PC-9 (cell line): ENCODE measurements at regions of chr9 and their contacts with region 1.

Region 1: GRCh38 chr9:129761901-129762364 is 9.1 kb upstream of the PTGES start:
- DNase-seq: peak; percentile 80 to 96
- H3K4me3 ChIP-seq: peak overlapping the region; percentile 23; the same call in 1 of the 2 replicates
- H3K27ac ChIP-seq: peak overlapping the region; percentile 97
- H3K4me1 ChIP-seq: peaks cover 60% of the 10 kb centered on the region
- H3K27me3 ChIP-seq: no peaks in the 10 kb centered on the region
- CTCF ChIP-seq: no peak

Region 2: DNA sequence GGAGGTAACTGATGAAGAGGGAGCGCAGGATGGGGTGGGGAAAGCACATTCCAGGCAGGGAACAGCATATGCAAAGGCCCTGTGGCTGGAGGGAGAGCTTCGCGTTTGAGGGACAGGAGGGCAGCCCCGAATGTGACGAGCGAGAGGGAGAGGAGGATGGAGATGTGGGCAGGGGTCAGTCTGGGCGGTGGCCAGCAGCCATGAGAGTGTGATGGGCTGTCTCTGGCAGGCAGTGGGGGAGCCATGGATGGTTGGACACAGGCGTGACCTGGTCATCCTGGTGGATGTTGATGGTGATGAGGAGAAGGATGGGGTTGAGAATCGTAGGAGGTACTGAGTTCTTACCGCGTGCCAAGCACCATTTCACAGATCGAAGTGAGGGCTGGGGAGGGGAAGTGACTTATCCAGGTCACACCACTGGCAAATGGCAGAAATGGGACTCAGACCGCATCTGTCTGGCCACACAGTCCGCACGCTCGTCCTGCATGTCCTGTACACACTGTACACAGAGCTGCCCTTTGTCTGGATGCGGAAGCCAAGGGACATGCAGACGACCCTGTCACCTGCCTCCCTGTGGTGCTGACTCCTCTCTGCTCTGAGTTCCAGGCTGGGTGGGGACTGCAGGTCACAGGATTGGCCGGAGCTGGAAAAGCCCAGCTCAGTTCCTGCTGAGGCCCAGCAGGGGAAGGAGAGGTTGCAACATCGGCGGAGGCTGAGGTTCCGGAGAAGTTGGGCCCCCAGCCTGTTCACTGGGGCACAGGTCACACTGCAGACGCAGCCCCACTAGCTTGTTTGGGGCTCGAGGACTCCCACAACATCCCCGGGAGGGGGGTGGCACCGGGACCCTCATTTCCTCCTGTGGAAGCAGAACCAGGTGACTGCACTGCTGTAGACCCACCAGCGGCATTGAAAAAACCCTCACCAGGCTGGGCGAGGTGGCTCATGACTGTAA is 418.2 kb before region 1 on chr9:
- CTCF ChIA-PET with region 1: no interaction called
- POLR2A ChIA-PET with region 1: no interaction called
- intact Hi-C with region 1: no loop called
- DNase-seq: peak in 1 of 2 experiments; percentile 79
- H3K4me3 ChIP-seq: no peak overlapping the region
- H3K27ac ChIP-seq: peak overlapping the region; percentile 68
- H3K4me1 ChIP-seq: peaks cover 30% of the 10 kb centered on the region
- H3K27me3 ChIP-seq: no peaks in the 10 kb centered on the region
- CTCF ChIP-seq: no peak

Region 3: GRCh38 chr9:129676975-129677841 is 84.7 kb before region 1 on chr9:
- CTCF ChIA-PET with region 1: no interaction called
- POLR2A ChIA-PET with region 1: no interaction called
- intact Hi-C with region 1: no loop called
- DNase-seq: no peak
- H3K4me3 ChIP-seq: no peak overlapping the region
- H3K27ac ChIP-seq: no peak overlapping the region
- H3K4me1 ChIP-seq: no peaks in the 10 kb centered on the region
- H3K27me3 ChIP-seq: peaks cover 39% of the 10 kb centered on the region; the same call in 1 of the 2 replicates
- CTCF ChIP-seq: no peak

Region 4: DNA sequence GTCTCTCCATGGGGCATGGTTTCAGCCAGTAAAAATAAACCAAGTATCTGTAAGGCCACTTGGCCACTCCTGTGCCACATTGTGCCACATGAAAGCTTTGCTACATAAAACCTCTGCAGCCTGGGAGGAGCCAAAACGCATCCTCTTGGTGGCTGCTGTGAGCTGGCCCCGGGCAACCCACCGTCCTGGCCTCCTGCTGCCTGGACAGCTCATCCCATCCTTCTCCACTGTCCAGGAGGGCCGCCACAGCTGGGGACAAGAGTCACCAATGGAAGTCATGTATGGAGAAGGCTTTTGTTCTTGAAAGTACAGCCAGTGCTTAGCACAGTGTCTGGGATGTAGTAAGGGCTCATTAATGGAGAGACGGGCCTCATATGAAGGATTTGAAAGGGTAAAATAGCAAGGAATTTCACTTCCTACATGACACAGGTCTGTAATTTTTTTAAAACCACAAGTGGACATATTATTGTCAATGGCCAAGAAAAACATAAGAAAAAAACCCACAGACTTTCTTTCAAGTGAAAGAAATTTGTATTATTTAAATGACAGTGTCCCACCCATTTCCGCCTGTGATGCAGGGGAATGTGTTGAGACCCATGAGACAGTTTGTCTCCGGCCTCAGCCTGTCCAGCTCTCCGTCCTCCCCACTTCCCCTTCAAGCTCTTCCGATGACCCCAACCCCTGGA is 15.7 kb before region 1 on chr9:
- CTCF ChIA-PET with region 1: interaction called, 4 read pairs
- POLR2A ChIA-PET with region 1: interaction called, 42 read pairs
- intact Hi-C with region 1: loop called (anchors 1 kb)
- DNase-seq: no peak
- H3K4me3 ChIP-seq: no peak overlapping the region
- H3K27ac ChIP-seq: no peak overlapping the region
- H3K4me1 ChIP-seq: peaks cover 41% of the 10 kb centered on the region
- H3K27me3 ChIP-seq: no peaks in the 10 kb centered on the region
- CTCF ChIP-seq: no peak

Region 5: GRCh38 chr9:129776938-129777768 is 15.2 kb after region 1 on chr9:
- CTCF ChIA-PET with region 1: interaction called, 4 read pairs
- POLR2A ChIA-PET with region 1: interaction called, 37 read pairs
- intact Hi-C with region 1: loop called (anchors 1 kb)
- DNase-seq: peak; percentile 96 to 98
- H3K4me3 ChIP-seq: peak overlapping the region; percentile 23; the same call in 1 of the 2 replicates
- H3K27ac ChIP-seq: peak overlapping the region; percentile 71
- H3K4me1 ChIP-seq: peaks cover 84% of the 10 kb centered on the region
- H3K27me3 ChIP-seq: no peaks in the 10 kb centered on the region
- CTCF ChIP-seq: no peak

Region 6: DNA sequence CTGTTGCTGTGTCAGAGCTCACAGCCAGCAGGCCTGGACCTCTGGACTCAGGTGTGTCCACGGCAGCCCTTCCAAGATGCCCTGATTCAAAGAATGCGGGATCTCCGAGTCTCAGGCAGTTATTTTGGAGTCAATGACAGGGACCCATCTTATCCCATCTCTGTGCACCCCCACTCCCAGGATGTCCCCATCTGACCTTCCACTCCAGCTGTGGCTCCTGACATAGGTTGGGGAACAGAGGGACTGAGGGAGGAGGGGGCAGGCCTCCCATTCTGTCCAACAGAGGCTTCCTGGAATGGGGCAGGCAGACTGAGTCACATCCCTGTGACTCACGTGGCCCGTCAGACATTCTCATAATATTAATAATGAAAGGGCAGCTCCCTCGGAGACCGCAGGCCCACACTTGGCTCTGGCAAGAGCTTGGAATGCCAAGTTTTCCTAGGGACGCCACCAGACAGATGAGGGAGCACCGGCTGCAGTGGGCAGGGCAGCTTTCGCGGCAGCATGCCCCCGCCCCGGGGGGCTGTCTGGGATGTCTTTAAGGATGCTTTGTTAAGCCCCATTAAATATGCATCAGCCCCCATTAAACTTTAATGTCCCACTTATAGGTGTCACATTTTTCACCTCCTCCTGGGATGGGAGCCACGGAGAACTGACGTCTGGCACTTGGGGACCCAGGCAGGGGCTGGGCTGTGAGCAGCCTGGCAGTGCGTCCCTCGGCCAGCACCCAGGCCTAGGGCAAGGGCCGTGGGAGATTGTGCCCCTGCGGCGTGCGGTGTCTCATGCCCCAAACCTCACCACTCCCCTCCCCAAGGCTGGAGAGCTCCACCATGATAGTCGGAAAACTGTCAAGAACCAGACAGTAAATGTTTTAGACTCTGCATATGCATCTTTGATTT is 1200.7 kb after region 1 on chr9:
- CTCF ChIA-PET with region 1: no interaction called
- POLR2A ChIA-PET with region 1: interaction called, 13 read pairs
- intact Hi-C with region 1: no loop called
- DNase-seq: peak; percentile 84 to 88
- H3K4me3 ChIP-seq: no peak overlapping the region
- H3K27ac ChIP-seq: no peak overlapping the region
- H3K4me1 ChIP-seq: peaks cover 21% of the 10 kb centered on the region
- H3K27me3 ChIP-seq: peaks cover 6% of the 10 kb centered on the region; the same call in 1 of the 2 replicates
- CTCF ChIP-seq: no peak